Right ventricle myocardium superior (tissue), 1 donor: ENCODE measurements at regions of chr9 and their contacts with region 1.

Region 1: GRCh38 chr9:89602978-89603766 is 1.6 kb upstream of the GADD45G start:
- DNase-seq: peak; percentile 93
- ATAC-seq: peak; percentile 42

Region 2: GRCh38 chr9:89750147-89750861 is 147.1 kb after region 1 on chr9:
- intact Hi-C with region 1: loop called (anchors 10 kb)
- DNase-seq: peak; percentile 81
- ATAC-seq: peak; percentile 71

Region 3: DNA sequence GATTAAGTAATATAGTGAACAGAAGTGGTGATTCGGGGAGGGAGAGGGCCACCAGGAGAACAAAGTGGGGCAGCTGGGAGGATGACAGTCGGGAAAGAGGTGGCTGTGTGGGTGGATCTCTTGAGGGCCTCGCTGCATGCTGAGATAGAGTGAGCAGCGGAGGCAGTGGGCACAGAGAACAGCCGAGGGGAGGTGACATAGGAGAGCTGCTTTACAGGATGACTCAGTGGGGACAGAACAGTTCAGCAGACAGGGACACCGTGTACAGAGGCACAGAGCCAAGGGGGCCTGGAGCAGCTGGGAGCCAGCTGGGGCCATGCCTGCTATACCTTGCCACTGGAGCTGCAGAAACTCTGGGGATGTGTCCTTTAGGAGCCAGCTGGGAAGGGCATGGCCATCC is 275.5 kb after region 1 on chr9:
- intact Hi-C with region 1: loop called (anchors 10 kb)
- DNase-seq: peak; percentile 88
- ATAC-seq: peak; percentile 80

Region 4: GRCh38 chr9:89929673-89930480 is 326.7 kb after region 1 on chr9:
- intact Hi-C with region 1: loop called (anchors 10 kb)
- DNase-seq: peak; percentile 45
- ATAC-seq: peak; percentile 80

Region 5: DNA sequence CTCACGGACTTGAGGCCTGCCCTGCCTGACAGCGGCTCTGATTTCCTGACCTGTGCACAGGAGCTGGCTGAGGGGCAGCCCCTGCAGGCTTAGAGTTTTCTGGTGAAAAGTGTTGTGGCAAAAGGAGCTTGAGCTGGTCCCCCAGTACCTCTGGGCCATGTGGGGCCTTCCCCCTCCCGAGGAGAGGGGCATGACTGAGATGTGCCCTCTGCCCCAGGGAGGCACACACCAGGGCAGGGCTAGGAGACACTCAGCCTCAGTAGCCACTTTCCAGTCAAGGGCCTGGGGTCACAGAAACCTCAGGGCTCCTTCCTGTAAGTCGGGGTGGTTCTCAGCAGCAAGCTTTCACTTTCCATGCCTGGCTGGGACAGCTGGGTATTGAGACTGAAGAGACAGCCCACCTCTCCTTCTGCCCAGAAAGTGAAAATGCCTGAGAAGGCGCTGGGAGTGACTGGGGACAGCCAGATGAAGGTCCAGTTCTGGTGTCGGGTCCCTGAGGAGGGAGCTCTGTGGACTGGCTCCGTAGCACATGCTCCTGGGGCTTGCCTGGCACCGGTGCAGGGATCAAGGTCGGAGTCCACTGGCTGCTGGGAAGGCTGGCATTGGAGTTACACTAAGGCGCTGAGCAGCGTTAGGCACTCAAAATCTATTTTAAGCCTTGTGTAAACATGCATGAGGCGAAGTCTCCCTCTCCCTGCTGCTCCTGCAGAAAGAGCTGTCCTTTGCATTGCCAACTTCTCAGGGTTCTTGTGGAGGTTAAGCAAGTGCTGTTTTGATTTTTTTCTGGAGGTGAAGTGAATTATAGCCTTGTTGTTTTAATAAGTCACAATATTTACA is 396.6 kb after region 1 on chr9:
- intact Hi-C with region 1: loop called (anchors 10 kb)
- DNase-seq: peak; percentile 85
- ATAC-seq: peak; percentile 88

Region 6: GRCh38 chr9:90099262-90099963 is 496.2 kb after region 1 on chr9:
- intact Hi-C with region 1: loop called (anchors 2 kb)
- DNase-seq: no peak
- ATAC-seq: peak; percentile 56